ENCODE measurements at regions of chr10 and their contacts with region 1.

Region 1: DNA sequence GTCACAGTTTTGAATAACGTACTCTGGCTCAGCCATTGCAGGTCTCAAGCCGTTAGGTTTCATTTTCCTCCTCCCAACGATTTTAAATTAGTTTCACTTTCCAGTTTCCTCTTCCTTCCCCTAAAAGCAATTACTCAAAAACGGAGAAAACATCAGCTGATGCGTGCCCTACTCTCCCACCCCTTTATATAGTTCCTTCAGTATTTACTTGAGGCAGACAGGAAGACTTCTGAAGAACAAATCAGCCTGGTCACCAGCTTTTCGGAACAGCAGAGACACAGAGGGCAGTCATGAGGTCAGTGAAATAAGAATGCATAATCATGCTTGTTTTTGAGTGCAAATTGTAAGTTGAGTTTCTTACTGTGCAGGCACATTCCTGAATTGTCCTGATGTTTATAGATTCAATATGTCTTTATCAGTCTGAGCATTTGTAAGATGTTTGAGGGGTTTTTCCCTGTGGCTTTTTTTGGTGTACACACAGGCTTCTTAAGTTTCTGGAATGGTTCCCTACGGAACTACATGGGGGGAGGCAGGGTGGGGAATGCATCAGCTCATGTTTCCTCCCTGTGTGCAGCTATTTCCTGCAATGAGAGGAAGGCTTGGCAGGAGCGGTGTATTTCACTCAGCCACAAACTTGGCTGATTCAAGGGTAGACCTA is at the start of gene IFIT3:
- DNase-seq: no peak
- ATAC-seq: peak; percentile 70
- H3K4me3 Mint-ChIP-seq: peak within 1 kb of the TSS; percentile 92
- H3K27ac Mint-ChIP-seq: peak within 1 kb of the TSS; percentile 94
- H3K4me1 Mint-ChIP-seq: peaks cover 30% of the 10 kb centered on the region
- H3K27me3 Mint-ChIP-seq: no peaks in the 10 kb centered on the region
- total RNA-seq, gene IFIT3: 72.5 to 75.6 TPM

Region 2: DNA sequence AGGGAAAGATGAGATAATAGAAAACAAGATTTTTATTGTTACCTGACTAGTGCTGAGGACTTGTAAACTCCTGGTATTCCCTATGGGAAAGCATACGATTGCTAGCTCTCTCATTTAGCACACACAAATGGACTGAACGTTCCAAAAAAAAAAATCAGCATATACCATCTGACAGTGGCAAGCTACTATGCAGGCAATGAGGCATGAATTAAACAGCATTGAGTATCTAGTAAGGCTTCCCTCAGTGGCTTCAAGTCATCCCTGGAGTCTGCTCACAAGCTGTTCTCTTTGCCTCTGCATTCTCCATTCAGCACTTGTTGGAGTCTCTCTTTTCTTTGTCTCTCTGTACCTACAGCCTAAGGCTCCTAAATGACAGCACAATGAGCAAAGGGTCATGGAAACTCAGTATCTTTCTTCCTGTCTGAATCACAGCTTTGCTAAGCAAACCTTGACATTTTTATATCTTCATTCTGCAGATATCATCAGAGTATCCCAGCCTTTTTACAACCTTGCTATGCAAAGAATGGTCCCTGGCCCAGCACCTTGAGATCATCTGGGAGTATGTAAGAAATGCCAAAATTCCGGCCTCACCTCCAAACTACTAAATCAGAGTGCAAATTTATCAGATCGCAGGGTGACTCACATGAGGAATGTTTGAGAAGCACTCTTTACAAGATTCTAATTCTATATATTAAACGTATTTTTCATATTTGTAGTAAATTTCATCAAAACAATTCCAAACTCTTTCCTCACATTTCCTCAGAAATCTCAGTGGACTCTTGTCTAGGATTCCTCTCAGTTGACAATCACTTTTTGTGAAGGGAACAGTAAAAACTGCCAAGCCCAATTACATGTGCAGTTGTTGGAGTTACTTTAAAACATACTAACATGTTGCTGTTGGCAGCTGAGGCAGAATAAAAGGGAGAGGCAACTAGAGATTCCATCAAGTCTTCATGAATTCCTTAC is 65.5 kb before region 1 on chr10:
- POLR2A ChIA-PET with region 1: no interaction called
- DNase-seq: no peak
- ATAC-seq: no peak
- H3K4me3 Mint-ChIP-seq: no peak overlapping the region
- H3K27ac Mint-ChIP-seq: no peak overlapping the region
- H3K4me1 Mint-ChIP-seq: peaks cover 6% of the 10 kb centered on the region
- H3K27me3 Mint-ChIP-seq: peaks cover 26% of the 10 kb centered on the region

Region 3: DNA sequence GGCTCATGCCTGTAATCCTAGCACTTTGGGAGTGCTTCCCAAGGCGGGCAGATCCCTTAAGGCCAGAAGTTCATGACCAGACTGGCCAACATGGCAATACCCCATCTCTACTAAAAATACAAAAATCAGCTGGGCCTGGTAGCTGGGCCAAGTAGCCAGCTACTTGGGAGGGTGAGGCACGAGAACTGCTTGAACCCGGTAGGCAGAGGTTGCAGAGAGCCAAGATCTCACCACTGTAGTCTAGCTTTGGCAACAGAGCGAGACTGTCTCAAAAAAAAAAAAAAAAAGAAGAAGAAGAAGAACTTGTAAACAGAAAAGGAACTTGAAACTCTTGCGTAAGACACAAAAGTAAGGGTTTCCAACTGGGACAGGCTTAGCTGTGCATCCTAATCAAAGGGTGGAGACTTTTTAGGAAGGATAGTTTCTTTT is 31.7 kb before region 1 on chr10:
- POLR2A ChIA-PET with region 1: interaction called, 40 read pairs
- DNase-seq: no peak
- ATAC-seq: no peak
- H3K4me3 Mint-ChIP-seq: peak overlapping the region; percentile 56
- H3K27ac Mint-ChIP-seq: peak overlapping the region; percentile 74
- H3K4me1 Mint-ChIP-seq: peaks cover 38% of the 10 kb centered on the region
- H3K27me3 Mint-ChIP-seq: no peaks in the 10 kb centered on the region

Region 4: GRCh38 chr10:89301721-89302445 is 26.0 kb before region 1 on chr10 and contains the start of gene IFIT2:
- POLR2A ChIA-PET with region 1: interaction called, 40 read pairs
- DNase-seq: peak; percentile 40
- ATAC-seq: peak; percentile 75
- H3K4me3 Mint-ChIP-seq: peak within 1 kb of the TSS; percentile 95
- H3K27ac Mint-ChIP-seq: peak within 1 kb of the TSS; percentile 94
- H3K4me1 Mint-ChIP-seq: peaks cover 33% of the 10 kb centered on the region
- H3K27me3 Mint-ChIP-seq: no peaks in the 10 kb centered on the region
- total RNA-seq, gene IFIT2: 18.5 to 21.6 TPM

Region 5: DNA sequence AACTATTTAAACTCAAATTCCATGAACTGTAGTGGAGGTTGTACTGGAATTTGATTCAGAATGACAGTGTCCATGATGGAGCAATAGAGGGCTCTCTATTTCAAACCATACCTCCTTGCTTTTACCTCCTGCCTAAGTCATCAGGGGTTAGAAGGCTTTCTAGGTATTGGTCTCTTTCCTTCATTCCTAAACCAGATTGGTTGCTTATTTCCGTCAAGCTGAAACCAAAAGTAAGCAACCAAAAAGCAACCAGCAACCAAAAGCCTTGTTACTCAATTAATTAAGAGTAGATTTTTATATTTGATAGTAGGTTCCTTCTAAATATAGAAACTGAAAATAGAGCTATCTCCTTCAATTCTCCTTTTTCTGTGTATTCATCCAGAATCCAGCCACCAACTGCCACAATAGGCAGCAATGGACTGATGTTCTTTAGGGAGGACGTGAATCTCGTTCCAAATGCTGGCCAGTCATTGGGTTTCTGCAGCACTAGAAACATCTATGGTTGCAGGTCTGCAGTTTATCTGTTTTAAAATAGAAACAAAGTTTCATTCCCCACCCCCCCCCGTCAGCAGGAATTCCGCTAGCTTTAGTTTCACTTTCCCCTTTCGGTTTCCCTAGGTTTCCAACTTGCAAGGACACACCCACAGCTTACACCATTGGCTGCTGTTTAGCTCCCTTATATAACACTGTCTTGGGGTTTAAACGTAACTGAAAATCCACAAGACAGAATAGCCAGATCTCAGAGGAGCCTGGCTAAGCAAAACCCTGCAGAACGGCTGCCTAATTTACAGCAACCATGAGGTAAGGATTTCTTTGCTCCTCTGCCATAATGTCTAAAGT is 64.2 kb after region 1 on chr10 and contains the start of gene IFIT1:
- POLR2A ChIA-PET with region 1: interaction called, 28 read pairs
- DNase-seq: no peak
- ATAC-seq: peak; percentile 88
- H3K4me3 Mint-ChIP-seq: peak within 1 kb of the TSS; percentile 86
- H3K27ac Mint-ChIP-seq: peak within 1 kb of the TSS; percentile 88
- H3K4me1 Mint-ChIP-seq: peaks cover 35% of the 10 kb centered on the region
- H3K27me3 Mint-ChIP-seq: no peaks in the 10 kb centered on the region
- total RNA-seq, gene IFIT1: 45.7 to 48.4 TPM